Heart left ventricle (tissue), 16 donors: ENCODE measurements at regions of chr4 and their contacts with region 1.

Region 1: DNA sequence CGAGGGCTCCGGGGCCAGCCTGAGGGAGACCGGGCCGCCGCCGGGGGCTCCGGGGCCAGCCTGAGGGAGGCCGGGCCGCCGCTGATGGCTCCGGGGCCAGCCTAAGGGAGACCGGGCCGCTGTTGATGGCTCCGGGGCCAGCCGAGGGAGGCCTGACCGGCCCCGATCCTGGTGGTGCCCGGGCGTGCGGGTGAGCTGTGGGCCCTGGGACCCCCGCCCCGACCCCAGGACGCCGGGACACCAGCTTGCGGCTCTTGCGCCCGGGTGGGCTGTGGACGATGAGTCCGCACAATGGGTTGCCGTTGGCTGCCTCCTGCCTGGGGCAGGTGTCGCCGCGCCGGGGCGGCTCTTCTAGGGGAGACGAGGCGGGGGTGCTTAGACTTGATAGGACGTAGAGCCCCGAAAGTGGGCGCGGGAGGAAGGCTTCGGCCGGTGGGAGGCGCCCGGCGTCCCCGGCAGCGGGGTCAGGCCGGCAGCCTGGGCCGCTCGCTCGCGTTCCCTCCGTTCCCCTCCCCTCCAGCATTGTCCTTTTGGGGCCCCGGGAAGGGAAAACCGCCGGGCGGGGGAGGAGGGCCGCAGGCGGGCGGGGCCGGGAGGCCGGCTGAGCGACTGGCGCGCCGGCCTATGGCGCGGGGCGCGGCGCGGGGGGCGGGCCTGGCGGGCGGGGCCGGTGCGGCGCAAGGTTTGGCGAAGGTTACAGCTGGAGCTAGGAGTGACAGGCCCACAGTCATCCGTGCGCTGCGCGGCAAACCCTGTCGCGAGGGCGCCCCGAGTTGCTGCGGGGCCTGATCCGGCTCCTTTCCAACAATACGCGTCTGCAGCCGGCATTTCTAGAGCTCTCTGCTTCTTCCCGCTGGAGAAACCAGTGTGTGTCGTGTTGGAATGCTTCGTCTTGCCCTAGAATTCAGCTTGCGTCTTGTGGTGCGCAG is 790 bp downstream of the KIAA0232 start:
- DNase-seq: peak; percentile 93 to 95 (median 94)
- ATAC-seq: peak; percentile 79 to 90 (median 90)
- H3K4me3 ChIP-seq: peak overlapping the region; percentile 76 to 100 (median 99)
- H3K27ac ChIP-seq: peak overlapping the region; percentile 96 to 100 (median 100)
- H3K4me1 ChIP-seq: peaks cover 0 to 60% (median 43%) of the 10 kb centered on the region in 12 donors
- H3K27me3 ChIP-seq: no peaks in the 10 kb centered on the region
- CTCF ChIP-seq: peak in 5 of 12 donors; percentile 24 to 53 (median 27)
- POLR2A ChIP-seq: peak; percentile 73 to 85

Region 2: GRCh38 chr4:6716018-6716911 is 67.1 kb before region 1 on chr4 and contains the start of gene BLOC1S4:
- intact Hi-C with region 1: loop called in 9 of 10 experiments (anchors 2 to 10 kb)
- DNase-seq: peak; percentile 88 to 94 (median 91)
- ATAC-seq: peak; percentile 84 to 94 (median 93)
- H3K4me3 ChIP-seq: peak within 1 kb of the TSS; percentile 64 to 94 (median 76)
- H3K27ac ChIP-seq: peak within 1 kb of the TSS; percentile 80 to 97 (median 94)
- H3K4me1 ChIP-seq: peaks cover 6 to 38% (median 27%) of the 10 kb centered on the region in 12 donors
- H3K27me3 ChIP-seq: no peaks in the 10 kb centered on the region
- CTCF ChIP-seq: peak in 5 of 12 donors; percentile 13 to 36 (median 16)
- POLR2A ChIP-seq: peak in 1 of 2 donors; percentile 84
- total RNA-seq, gene BLOC1S4: 5.8 to 14.1 (median 7.8) TPM

Region 3: DNA sequence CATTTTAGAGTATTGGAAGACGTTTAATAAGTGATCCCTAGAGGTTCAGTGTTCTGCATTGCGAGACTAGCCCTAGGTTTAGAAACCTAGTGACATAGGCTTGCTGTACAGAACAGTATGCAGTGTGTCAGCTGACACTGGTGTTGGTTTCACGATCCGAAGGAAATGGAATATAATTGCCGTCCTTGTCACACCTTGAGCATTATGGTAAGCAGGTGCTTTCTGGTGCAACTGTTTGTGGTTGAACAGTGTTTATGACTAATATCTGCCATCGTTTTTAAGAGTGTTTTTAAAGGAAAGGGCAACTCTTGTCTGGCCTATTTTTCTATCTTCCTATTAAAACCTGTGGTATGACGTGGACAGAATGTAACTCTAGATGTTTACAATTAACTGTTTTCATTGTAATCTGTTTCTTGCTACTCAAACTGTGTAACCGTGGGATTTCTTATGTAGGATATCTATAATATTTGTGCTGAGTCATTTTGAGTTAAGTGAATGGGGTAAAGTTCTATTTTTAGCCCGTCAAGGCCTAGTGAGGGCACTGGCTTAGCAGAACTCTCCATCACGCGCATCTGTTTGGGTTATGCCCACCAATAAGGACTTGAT is 72.5 kb after region 1 on chr4:
- intact Hi-C with region 1: loop called in 6 of 10 experiments (anchors 2 to 5 kb)
- DNase-seq: peak in 1 of 5 donors; percentile 42
- ATAC-seq: peak; percentile 76 to 87 (median 82)
- H3K4me3 ChIP-seq: peak overlapping the region in 8 of 12 donors; percentile 10 to 36 (median 18)
- H3K27ac ChIP-seq: peak overlapping the region; percentile 50 to 91 (median 80)
- H3K4me1 ChIP-seq: peaks cover 0 to 47% (median 23%) of the 10 kb centered on the region in 12 donors
- H3K27me3 ChIP-seq: no peaks in the 10 kb centered on the region
- CTCF ChIP-seq: no peak
- POLR2A ChIP-seq: no peak

Region 4: DNA sequence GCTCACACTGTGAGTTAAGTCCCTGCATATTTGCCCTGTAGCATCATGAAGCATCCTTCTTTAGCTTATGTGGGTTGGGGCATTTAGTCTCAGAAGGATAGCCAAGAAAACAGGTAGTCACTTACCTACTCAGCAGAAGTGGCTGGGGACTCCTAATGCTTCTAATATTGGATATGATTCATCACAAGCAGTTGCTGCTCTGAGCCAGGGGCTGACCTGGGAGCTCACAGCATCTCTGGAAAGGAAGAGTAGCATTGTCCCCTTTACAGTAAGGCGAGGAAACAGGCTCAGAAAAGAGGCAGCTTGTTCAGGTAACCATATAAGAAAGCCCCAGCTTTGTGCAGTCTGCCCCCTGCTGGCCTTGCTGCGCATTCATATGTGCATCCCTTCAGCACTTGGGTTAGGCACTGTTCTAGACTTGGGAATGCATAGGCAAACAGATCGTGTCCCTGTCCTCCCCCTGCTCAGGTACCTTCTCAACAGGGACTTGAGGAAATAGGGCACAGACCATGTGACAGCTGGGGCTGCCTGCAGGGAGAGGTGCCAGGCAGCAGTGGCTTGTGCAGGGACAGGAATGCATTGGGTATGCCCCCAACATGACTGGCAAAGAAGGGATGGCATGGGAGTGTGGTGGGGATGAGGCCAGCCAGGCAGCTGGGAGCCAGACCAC is 90.6 kb after region 1 on chr4:
- intact Hi-C with region 1: loop called in 8 of 10 experiments (anchors 2 to 5 kb)
- DNase-seq: peak; percentile 59 to 83 (median 71)
- ATAC-seq: peak; percentile 52 to 78 (median 59)
- H3K4me3 ChIP-seq: no peak overlapping the region
- H3K27ac ChIP-seq: no peak overlapping the region
- H3K4me1 ChIP-seq: peaks cover 0 to 50% (median 26%) of the 10 kb centered on the region in 12 donors
- H3K27me3 ChIP-seq: no peaks in the 10 kb centered on the region
- CTCF ChIP-seq: peak; percentile 74 to 90 (median 82)
- POLR2A ChIP-seq: no peak

Region 5: GRCh38 chr4:6909073-6909965 is 126.0 kb after region 1 on chr4 and contains the start of gene TBC1D14:
- intact Hi-C with region 1: loop called in 1 of 10 experiments (anchors 1 kb)
- DNase-seq: peak; percentile 90 to 95 (median 91)
- ATAC-seq: peak; percentile 71 to 95 (median 94)
- H3K4me3 ChIP-seq: peak within 1 kb of the TSS; percentile 54 to 99 (median 90)
- H3K27ac ChIP-seq: peak within 1 kb of the TSS; percentile 95 to 100 (median 99)
- H3K4me1 ChIP-seq: peaks cover 4 to 57% (median 34%) of the 10 kb centered on the region in 12 donors
- H3K27me3 ChIP-seq: no peaks in the 10 kb centered on the region
- CTCF ChIP-seq: peak in 7 of 12 donors; percentile 15 to 45 (median 31)
- POLR2A ChIP-seq: peak in 1 of 2 donors; percentile 55
- total RNA-seq, gene TBC1D14: 31.3 to 51.0 (median 34.5) TPM

Region 6: DNA sequence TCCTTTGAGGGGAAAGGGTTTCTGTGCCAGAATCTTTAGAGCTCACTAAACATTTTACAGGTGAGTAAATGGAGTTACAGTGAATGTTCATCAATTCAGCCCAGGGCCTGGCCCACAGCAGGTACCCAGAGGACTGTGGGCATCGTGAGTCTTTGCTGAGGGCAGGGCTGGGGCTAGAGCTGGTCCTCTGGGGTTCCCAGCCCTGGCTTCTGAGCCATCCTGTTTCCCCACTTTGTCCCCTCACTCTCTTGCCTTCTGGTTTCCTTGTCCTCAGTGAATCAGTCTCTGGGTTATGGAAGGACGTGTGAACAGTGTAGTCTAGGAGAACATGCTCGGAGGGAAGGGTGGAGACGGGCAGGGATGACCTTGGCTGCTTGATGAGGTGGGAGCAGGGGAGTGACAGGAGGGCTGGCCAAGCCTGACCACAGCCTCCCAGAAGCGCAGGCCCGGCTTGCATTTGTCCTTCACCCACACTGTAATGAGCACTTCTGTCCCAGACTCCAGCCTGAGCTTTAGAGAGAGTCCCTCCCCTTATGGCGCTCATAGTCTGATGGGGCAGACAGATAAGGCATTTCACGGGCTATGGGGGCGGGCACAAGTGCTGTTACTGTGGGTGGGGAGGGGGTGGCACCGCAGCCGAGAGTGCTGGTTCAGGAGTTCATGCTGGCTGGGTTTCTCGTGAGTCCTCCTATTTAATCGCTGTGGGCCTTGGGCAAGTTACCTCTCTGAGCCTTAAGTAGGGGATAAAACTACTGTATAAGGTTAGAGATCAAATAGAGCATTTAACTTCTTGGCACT is 143.6 kb after region 1 on chr4:
- intact Hi-C with region 1: no loop called
- DNase-seq: peak in 2 of 5 donors; percentile 58 to 73
- ATAC-seq: peak in 3 of 4 donors; percentile 28 to 36 (median 35)
- H3K4me3 ChIP-seq: peak overlapping the region in 1 of 12 donors; percentile 27
- H3K27ac ChIP-seq: peak overlapping the region in 8 of 12 donors; percentile 30 to 96 (median 40)
- H3K4me1 ChIP-seq: peaks cover 0 to 81% (median 26%) of the 10 kb centered on the region in 12 donors
- H3K27me3 ChIP-seq: no peaks in the 10 kb centered on the region
- CTCF ChIP-seq: no peak
- POLR2A ChIP-seq: peak in 1 of 2 donors; percentile 40

Region 7: GRCh38 chr4:7042697-7043464 is 259.6 kb after region 1 on chr4 and contains the start of gene TADA2B:
- intact Hi-C with region 1: loop called in 1 of 10 experiments (anchors 5 kb)
- DNase-seq: peak; percentile 96 to 99 (median 98)
- ATAC-seq: peak; percentile 93 to 97 (median 95)
- H3K4me3 ChIP-seq: peak within 1 kb of the TSS; percentile 86 to 99 (median 99)
- H3K27ac ChIP-seq: peak within 1 kb of the TSS; percentile 79 to 95 (median 92)
- H3K4me1 ChIP-seq: peaks cover 8 to 56% (median 45%) of the 10 kb centered on the region in 12 donors
- H3K27me3 ChIP-seq: no peaks in the 10 kb centered on the region
- CTCF ChIP-seq: peak in 11 of 12 donors; percentile 17 to 60 (median 47)
- POLR2A ChIP-seq: peak in 1 of 2 donors; percentile 34
- total RNA-seq, gene TADA2B: 24.5 to 40.2 (median 30.8) TPM

Region 8: GRCh38 chr4:7067452-7068278 is 284.3 kb after region 1 on chr4 and contains the start of gene GRPEL1:
- intact Hi-C with region 1: loop called in 1 of 10 experiments (anchors 5 kb)
- DNase-seq: peak in 4 of 5 donors; percentile 99 to 100 (median 100)
- ATAC-seq: peak; percentile 97 to 99 (median 98)
- H3K4me3 ChIP-seq: peak within 1 kb of the TSS; percentile 70 to 99 (median 88)
- H3K27ac ChIP-seq: peak within 1 kb of the TSS; percentile 62 to 97 (median 91)
- H3K4me1 ChIP-seq: peaks cover 3 to 41% (median 22%) of the 10 kb centered on the region in 12 donors
- H3K27me3 ChIP-seq: no peaks in the 10 kb centered on the region
- CTCF ChIP-seq: peak in 1 of 12 donors; percentile 26
- POLR2A ChIP-seq: peak; percentile 97 to 99
- total RNA-seq, gene GRPEL1: 38.6 to 68.1 (median 55.4) TPM